Activated CD4-positive, alpha-beta T cell treated with anti-CD3 and anti-CD28 coated beads, Interleukin-2, amount 10 ng/mL, durations not matched to agents 7 days and 5 days (primary cell): ENCODE measurements at regions of chr22 and their contacts with region 1.

Region 1: GRCh38 chr22:46984751-46985506 is 222.5 kb downstream of the TBC1D22A start:
- DNase-seq: no peak
- H3K4me3 Mint-ChIP-seq: no peak overlapping the region
- H3K27ac Mint-ChIP-seq: no peak overlapping the region
- H3K4me1 Mint-ChIP-seq: no peaks in the 10 kb centered on the region
- H3K27me3 Mint-ChIP-seq: no peaks in the 10 kb centered on the region

Region 2: DNA sequence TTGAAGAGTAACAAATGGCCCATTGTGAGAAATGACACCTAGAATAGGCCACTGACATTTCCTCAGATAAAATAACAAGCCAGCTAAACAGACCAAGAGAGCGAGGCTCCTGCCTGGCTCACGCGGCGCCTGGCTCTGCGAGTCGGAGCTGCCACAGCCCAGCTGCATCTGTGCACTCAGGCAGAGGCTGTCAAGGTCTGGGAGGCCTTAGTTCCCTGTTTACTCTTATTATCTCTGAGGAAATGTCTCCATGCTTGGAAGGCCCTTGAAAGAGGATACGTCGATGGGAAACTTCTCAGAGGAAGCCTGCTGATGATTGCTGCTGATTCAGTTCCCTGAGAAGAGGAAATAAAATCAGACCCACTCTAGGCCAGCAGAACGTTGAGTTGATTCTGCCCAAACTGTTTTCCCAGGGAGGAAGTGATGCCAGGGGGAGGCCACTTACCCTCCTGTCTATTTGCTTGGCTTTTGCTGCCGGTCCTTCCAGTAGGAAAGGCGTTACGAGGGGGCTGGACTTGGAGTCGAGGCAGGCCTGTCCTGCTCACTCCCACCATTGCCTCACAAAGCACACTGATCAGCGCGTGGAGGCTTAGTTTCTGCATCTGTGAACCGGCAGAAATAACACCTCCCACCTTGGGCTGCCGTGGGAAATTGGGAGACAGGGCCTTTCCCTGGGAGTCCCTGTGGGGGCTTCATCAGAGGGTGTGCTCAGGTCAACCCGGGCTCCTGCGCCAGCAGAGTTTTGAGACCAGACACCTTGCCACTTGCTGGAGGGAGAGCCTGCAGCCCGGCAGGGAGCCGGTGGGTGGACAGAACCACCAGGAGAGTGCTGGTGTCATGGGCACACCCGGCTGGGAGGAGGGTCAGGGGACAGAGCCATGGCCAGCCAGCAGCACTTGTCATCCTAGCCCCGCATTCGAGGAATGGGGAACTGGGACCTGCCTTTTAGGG is 13.5 kb before region 1 on chr22:
- CTCF ChIA-PET with region 1: no interaction called
- POLR2A ChIA-PET with region 1: no interaction called
- DNase-seq: no peak
- H3K4me3 Mint-ChIP-seq: no peak overlapping the region
- H3K27ac Mint-ChIP-seq: peak overlapping the region; percentile 46
- H3K4me1 Mint-ChIP-seq: peaks cover 13% of the 10 kb centered on the region
- H3K27me3 Mint-ChIP-seq: no peaks in the 10 kb centered on the region

Region 3: DNA sequence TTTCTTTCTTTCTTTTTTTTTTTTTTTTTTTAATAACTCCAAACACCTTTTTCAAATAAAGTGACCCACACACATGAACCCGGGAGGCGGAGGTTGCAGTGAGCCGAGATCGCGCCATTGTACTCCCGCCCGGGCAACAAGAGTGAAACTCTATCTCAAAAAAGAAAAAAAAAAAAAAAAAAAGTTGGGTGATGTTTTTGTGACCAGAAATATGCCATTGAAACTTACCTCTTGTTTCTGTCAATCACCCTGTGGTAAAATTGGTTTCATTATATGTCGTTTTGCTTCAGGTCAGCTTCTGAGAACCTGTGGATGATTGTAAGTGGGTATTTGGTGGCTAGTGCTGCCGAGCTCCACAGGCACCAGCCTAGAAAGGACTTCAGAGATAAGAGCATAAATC is 16.4 kb after region 1 on chr22:
- CTCF ChIA-PET with region 1: no interaction called
- POLR2A ChIA-PET with region 1: interaction called, 12 read pairs
- DNase-seq: no peak
- H3K4me3 Mint-ChIP-seq: no peak overlapping the region
- H3K27ac Mint-ChIP-seq: no peak overlapping the region
- H3K4me1 Mint-ChIP-seq: peaks cover 16% of the 10 kb centered on the region
- H3K27me3 Mint-ChIP-seq: no peaks in the 10 kb centered on the region

Region 4: GRCh38 chr22:47012589-47013411 is 27.9 kb after region 1 on chr22:
- CTCF ChIA-PET with region 1: no interaction called
- POLR2A ChIA-PET with region 1: no interaction called
- DNase-seq: no peak
- H3K4me3 Mint-ChIP-seq: no peak overlapping the region
- H3K27ac Mint-ChIP-seq: peak overlapping the region; percentile 60
- H3K4me1 Mint-ChIP-seq: no peaks in the 10 kb centered on the region
- H3K27me3 Mint-ChIP-seq: no peaks in the 10 kb centered on the region